Body of pancreas (tissue), 4 donors: ENCODE measurements at regions of chr1 and their contacts with region 1.

Region 1: DNA sequence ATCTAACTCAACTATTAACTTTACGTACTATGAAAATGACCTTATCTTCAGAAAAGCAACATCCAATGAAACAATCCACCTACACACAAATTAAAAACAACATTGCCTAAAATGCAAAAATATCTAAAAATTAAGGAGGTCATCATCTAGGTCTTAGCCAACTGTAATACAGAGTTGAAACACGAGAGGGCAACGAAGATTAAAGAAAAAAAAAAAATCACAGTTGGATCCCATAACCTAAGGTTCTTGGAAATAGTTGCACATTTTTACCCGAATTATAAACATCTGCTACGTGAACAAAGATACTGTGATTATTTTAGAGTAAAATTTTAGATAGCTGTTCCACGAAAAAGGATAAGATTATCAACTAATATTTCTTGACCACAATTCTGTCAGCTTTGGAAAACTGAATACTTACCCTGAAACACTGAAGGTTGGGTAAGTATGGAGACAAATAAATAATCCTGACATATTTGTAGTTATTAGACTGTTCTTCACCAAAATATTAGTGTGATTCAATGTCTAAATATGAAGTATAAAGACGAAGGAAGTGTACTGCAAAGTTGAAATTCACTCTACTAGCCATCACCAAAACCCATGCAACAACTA is 88.0 kb upstream of the AK4 start:
- DNase-seq: no peak
- ATAC-seq: no peak
- H3K4me3 ChIP-seq: no peak overlapping the region
- H3K27ac ChIP-seq: no peak overlapping the region
- H3K4me1 ChIP-seq: peaks cover 21% of the 10 kb centered on the region
- H3K27me3 ChIP-seq: no peaks in the 10 kb centered on the region
- CTCF ChIP-seq: peak; percentile 28 to 81 (median 62)
- POLR2A ChIP-seq: no peak

Region 2: DNA sequence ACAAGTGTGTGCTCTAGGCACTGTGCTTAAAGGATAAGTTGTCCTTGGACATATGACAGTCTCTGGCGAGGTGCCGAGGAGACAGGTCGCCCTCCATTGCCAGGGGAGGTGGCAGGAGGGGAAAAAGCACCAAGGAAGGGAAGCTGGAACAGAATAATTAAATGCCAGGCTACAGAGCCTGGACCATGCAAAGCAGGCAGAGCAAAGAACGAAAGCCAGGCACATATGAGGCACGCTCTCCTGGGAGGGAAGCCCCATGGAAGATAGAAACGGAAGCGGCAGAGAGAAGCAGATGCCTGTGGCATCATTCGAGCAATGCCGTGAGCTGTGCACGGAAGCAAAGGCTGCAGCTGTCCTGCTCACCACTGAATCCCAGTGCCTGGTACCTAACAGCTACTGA is 184.9 kb before region 1 on chr1:
- intact Hi-C with region 1: no loop called
- DNase-seq: peak in 1 of 4 donors; percentile 53
- ATAC-seq: no peak
- H3K4me3 ChIP-seq: no peak overlapping the region
- H3K27ac ChIP-seq: peak overlapping the region in 2 of 4 donors; percentile 22 to 29
- H3K4me1 ChIP-seq: peaks cover 39% of the 10 kb centered on the region
- H3K27me3 ChIP-seq: no peaks in the 10 kb centered on the region
- CTCF ChIP-seq: no peak
- POLR2A ChIP-seq: no peak

Region 3: DNA sequence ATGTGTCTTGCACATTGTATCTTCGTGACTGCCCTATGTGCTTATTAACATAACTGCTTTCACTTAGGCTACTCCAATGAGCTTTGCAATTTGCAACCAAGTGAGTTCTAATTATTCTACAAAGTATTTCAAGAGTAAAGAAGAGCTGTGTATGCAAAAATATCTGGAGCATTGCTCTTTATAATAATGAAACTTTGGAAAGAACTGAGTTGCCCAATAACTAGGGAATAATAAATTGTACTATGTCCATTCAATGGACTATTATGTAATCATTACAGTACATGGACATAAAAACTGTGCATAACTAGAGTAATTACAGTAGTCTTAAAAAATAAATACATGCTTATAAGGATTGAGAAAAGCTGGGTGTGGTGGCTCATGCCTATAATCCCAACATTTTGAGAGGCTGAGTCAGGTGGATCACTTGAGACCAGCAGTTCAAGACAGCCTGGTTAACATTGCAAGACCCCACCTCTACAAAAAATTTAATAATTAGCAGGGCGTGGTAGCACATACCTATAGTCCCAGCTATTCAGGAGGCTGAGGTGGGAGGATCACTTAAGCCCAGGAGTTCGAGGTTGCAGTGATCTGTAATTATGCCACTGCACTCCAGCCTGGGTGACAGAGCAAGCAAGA is 23.4 kb before region 1 on chr1:
- intact Hi-C with region 1: no loop called
- DNase-seq: no peak
- ATAC-seq: no peak
- H3K4me3 ChIP-seq: no peak overlapping the region
- H3K27ac ChIP-seq: no peak overlapping the region
- H3K4me1 ChIP-seq: no peaks in the 10 kb centered on the region
- H3K27me3 ChIP-seq: no peaks in the 10 kb centered on the region
- CTCF ChIP-seq: no peak
- POLR2A ChIP-seq: no peak

Region 4: GRCh38 chr1:65209005-65209885 is 149.2 kb after region 1 on chr1:
- intact Hi-C with region 1: loop called (anchors 10 kb)
- DNase-seq: peak; percentile 17 to 30 (median 25)
- ATAC-seq: peak; percentile 59
- H3K4me3 ChIP-seq: no peak overlapping the region
- H3K27ac ChIP-seq: no peak overlapping the region
- H3K4me1 ChIP-seq: peaks cover 9% of the 10 kb centered on the region
- H3K27me3 ChIP-seq: no peaks in the 10 kb centered on the region
- CTCF ChIP-seq: peak; percentile 39 to 68 (median 65)
- POLR2A ChIP-seq: no peak

Region 5: DNA sequence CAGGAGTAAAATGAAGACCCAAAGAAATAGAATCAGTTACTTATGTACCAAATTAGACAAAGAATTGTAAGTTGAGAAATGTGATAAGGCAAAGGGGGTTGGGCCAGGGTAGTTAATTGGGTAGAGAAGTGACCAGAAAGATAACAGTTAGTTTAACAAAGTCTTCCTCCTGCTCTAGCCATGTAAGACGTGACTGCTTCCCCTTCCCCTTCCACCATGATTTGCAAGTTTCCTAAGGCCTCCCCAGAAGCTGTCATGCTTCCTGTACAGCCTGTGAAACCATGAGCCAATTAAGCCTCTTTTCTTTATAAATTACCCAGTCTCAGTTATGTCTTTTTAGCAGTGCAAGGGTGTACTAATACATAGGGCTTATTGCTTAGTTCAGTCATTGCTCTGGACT is 590.6 kb after region 1 on chr1:
- intact Hi-C with region 1: no loop called
- DNase-seq: no peak
- ATAC-seq: no peak
- H3K4me3 ChIP-seq: no peak overlapping the region
- H3K27ac ChIP-seq: no peak overlapping the region
- H3K4me1 ChIP-seq: no peaks in the 10 kb centered on the region
- H3K27me3 ChIP-seq: no peaks in the 10 kb centered on the region
- CTCF ChIP-seq: no peak
- POLR2A ChIP-seq: no peak